ENCODE measurements at regions of chr17 and their contacts with region 1.

Region 1: GRCh38 chr17:9232591-9233270 is 211.4 kb downstream of the NTN1 start:
- DNase-seq: peak in 2 of 5 donors; percentile 18 to 51
- ATAC-seq: no peak
- H3K4me3 ChIP-seq: no peak overlapping the region
- H3K27ac ChIP-seq: no peak overlapping the region
- H3K4me1 ChIP-seq: peaks cover 0 to 7% (median 0%) of the 10 kb centered on the region in 12 donors
- H3K27me3 ChIP-seq: no peaks in the 10 kb centered on the region
- CTCF ChIP-seq: no peak
- POLR2A ChIP-seq: no peak

Region 2: GRCh38 chr17:9266031-9266680 is 33.4 kb after region 1 on chr17:
- intact Hi-C with region 1: loop called in 1 of 10 experiments (anchors 5 kb)
- DNase-seq: no peak
- ATAC-seq: peak in 3 of 4 donors; percentile 27 to 67 (median 39)
- H3K4me3 ChIP-seq: no peak overlapping the region
- H3K27ac ChIP-seq: no peak overlapping the region
- H3K4me1 ChIP-seq: peaks cover 0 to 18% (median 3%) of the 10 kb centered on the region in 12 donors
- H3K27me3 ChIP-seq: no peaks in the 10 kb centered on the region
- CTCF ChIP-seq: no peak
- POLR2A ChIP-seq: no peak

Region 3: DNA sequence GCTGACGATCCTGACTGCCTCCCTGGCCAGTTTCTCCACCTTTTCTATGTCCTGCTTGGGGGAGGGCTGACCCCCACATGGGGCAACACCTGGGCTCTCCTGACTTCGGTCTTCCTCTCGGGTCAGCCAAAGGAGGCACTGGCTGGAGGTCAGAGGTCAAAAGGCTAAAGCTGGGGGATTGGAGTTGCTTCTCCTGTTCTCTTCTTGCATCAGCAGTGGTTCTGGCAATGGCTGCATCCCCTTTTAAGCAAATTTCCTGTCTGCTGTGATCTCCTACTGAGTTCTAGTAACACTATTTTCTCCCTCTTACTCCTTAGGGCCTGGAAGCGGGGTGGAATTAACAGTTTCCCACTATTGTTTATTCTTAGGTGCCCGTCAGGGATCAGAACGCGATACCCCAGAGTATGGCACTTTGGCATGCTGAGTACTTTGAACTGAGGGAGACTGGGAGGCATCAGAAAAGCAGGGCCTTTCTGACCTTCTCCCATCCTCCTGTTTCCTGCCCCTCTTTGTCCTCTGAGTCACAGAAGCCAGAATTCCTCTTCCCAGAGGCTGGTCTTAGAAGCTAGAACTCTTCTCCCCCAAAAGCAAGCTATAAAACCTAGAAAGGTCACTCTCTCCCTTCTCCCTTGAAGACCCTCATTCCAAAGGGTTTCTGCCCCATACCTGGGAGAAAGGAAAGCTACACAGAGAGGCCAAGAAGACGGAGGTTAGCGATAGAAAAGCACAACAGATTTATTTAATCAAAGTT is 74.7 kb after region 1 on chr17:
- intact Hi-C with region 1: no loop called
- DNase-seq: no peak
- ATAC-seq: no peak
- H3K4me3 ChIP-seq: no peak overlapping the region
- H3K27ac ChIP-seq: no peak overlapping the region
- H3K4me1 ChIP-seq: no peaks in the 10 kb centered on the region
- H3K27me3 ChIP-seq: no peaks in the 10 kb centered on the region
- CTCF ChIP-seq: no peak
- POLR2A ChIP-seq: no peak

Region 4: DNA sequence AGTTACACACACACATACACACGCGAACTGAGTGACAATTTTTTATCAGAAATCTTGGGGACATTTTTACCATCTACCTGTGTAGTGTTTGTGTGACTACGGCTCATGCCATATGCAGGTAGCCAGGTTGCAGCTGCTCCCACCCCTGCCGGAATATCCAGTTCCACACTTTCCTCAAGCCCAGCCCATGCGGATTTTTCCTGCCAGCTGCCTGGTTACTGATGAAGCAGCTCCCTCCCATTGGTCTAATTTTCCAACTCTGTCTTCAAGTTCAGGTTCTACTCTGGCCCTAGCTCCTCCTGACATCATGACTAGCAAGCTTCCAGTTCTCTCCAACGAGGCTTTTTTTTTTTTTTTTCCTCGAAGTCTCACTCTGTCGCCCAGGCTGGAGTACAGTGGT is 584.4 kb after region 1 on chr17:
- intact Hi-C with region 1: no loop called
- DNase-seq: no peak
- ATAC-seq: peak in 3 of 4 donors; percentile 47 to 82 (median 57)
- H3K4me3 ChIP-seq: no peak overlapping the region
- H3K27ac ChIP-seq: no peak overlapping the region
- H3K4me1 ChIP-seq: no peaks in the 10 kb centered on the region
- H3K27me3 ChIP-seq: peaks cover 0 to 20% (median 0%) of the 10 kb centered on the region in 9 donors
- CTCF ChIP-seq: no peak
- POLR2A ChIP-seq: no peak